CD4-positive, alpha-beta memory T cell (primary cell): ENCODE measurements at regions of chr1 and their contacts with region 1.

Region 1: GRCh38 chr1:108691942-108692723 is at the start of gene PRPF38B:
- DNase-seq: peak; percentile 92 to 96 (median 93)
- H3K4me3 ChIP-seq: peak within 1 kb of the TSS; percentile 68 to 94
- H3K4me3 Mint-ChIP-seq: peak within 1 kb of the TSS; percentile 90 to 97 (median 94)
- H3K27ac ChIP-seq: peak within 1 kb of the TSS; percentile 98
- H3K27ac Mint-ChIP-seq: peak within 1 kb of the TSS; percentile 96 to 99 (median 98)
- H3K4me1 ChIP-seq: peaks cover 50% of the 10 kb centered on the region
- H3K4me1 Mint-ChIP-seq: peaks cover 20 to 66% (median 36%) of the 10 kb centered on the region in 4 donors
- H3K27me3 ChIP-seq: no peaks in the 10 kb centered on the region
- H3K27me3 Mint-ChIP-seq: no peaks in the 10 kb centered on the region
- total RNA-seq, gene PRPF38B: 124 to 126 TPM

Region 2: GRCh38 chr1:108533351-108534083 is 158.6 kb before region 1 on chr1:
- CTCF ChIA-PET with region 1: no interaction called
- POLR2A ChIA-PET with region 1: no interaction called
- intact Hi-C with region 1: no loop called
- DNase-seq: no peak
- H3K4me3 ChIP-seq: no peak overlapping the region
- H3K4me3 Mint-ChIP-seq: no peak overlapping the region
- H3K27ac ChIP-seq: no peak overlapping the region
- H3K27ac Mint-ChIP-seq: no peak overlapping the region
- H3K4me1 ChIP-seq: no peaks in the 10 kb centered on the region
- H3K4me1 Mint-ChIP-seq: peaks cover 0 to 3% (median 0%) of the 10 kb centered on the region in 4 donors
- H3K27me3 ChIP-seq: no peaks in the 10 kb centered on the region
- H3K27me3 Mint-ChIP-seq: peaks cover 3 to 7% of the 10 kb centered on the region in 2 donors

Region 3: DNA sequence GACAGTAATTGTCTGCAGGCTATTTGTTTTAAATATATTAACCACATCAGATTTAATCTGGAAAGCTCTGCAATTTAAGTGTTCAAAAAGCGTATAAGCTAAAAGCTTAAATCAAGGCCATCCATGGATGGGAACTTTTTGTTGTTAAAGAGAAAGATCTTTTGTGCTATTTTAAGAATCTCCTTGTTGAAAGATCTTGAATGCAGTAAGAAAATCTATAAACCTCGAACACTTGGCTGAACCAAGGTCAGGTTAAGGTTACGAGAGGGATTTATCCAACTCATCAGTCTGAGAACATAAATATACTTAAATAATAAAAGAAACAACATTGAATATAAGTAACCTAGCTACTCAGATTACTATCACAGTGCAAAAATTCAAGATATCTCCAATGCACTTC is 143.7 kb before region 1 on chr1:
- CTCF ChIA-PET with region 1: no interaction called
- POLR2A ChIA-PET with region 1: no interaction called
- intact Hi-C with region 1: no loop called
- DNase-seq: no peak
- H3K4me3 ChIP-seq: no peak overlapping the region
- H3K4me3 Mint-ChIP-seq: no peak overlapping the region
- H3K27ac ChIP-seq: no peak overlapping the region
- H3K27ac Mint-ChIP-seq: no peak overlapping the region
- H3K4me1 ChIP-seq: no peaks in the 10 kb centered on the region
- H3K4me1 Mint-ChIP-seq: no peaks in the 10 kb centered on the region
- H3K27me3 ChIP-seq: no peaks in the 10 kb centered on the region
- H3K27me3 Mint-ChIP-seq: peaks cover 2 to 6% of the 10 kb centered on the region in 2 donors

Region 4: GRCh38 chr1:108559215-108560186 is 132.6 kb before region 1 on chr1 and contains the start of gene EEIG2:
- CTCF ChIA-PET with region 1: interaction called, 21 read pairs
- POLR2A ChIA-PET with region 1: interaction called, 73 read pairs
- intact Hi-C with region 1: loop called (anchors 1 kb)
- DNase-seq: peak; percentile 88 to 92 (median 90)
- H3K4me3 ChIP-seq: peak within 1 kb of the TSS; percentile 15 to 59
- H3K4me3 Mint-ChIP-seq: peak within 1 kb of the TSS; percentile 91 to 98 (median 96)
- H3K27ac ChIP-seq: peak within 1 kb of the TSS; percentile 65
- H3K27ac Mint-ChIP-seq: peak within 1 kb of the TSS; percentile 90 to 97 (median 95)
- H3K4me1 ChIP-seq: peaks cover 49% of the 10 kb centered on the region
- H3K4me1 Mint-ChIP-seq: peaks cover 25 to 45% (median 28%) of the 10 kb centered on the region in 4 donors
- H3K27me3 ChIP-seq: no peaks in the 10 kb centered on the region
- H3K27me3 Mint-ChIP-seq: no peaks in the 10 kb centered on the region
- total RNA-seq, gene EEIG2: 9.2 to 10.7 TPM

Region 5: GRCh38 chr1:108661030-108661620 is 31.0 kb before region 1 on chr1 and contains the start of gene HENMT1:
- CTCF ChIA-PET with region 1: interaction called, 45 read pairs
- POLR2A ChIA-PET with region 1: interaction called, 221 read pairs
- intact Hi-C with region 1: loop called (anchors 2 kb)
- DNase-seq: peak; percentile 88 to 90 (median 88)
- H3K4me3 ChIP-seq: peak within 1 kb of the TSS; percentile 47 to 79
- H3K4me3 Mint-ChIP-seq: peak within 1 kb of the TSS; percentile 80 to 88 (median 86)
- H3K27ac ChIP-seq: peak within 1 kb of the TSS; percentile 97
- H3K27ac Mint-ChIP-seq: peak within 1 kb of the TSS; percentile 96 to 98 (median 98)
- H3K4me1 ChIP-seq: peaks cover 25% of the 10 kb centered on the region
- H3K4me1 Mint-ChIP-seq: peaks cover 18 to 41% (median 29%) of the 10 kb centered on the region in 4 donors
- H3K27me3 ChIP-seq: no peaks in the 10 kb centered on the region
- H3K27me3 Mint-ChIP-seq: no peaks in the 10 kb centered on the region
- total RNA-seq, gene HENMT1: 19.1 to 19.3 TPM

Region 6: GRCh38 chr1:108708691-108709660 is 16.8 kb after region 1 on chr1:
- CTCF ChIA-PET with region 1: interaction called, 94 read pairs
- POLR2A ChIA-PET with region 1: interaction called, 283 read pairs
- intact Hi-C with region 1: loop called (anchors 1 kb)
- DNase-seq: peak; percentile 65 to 70 (median 67)
- H3K4me3 ChIP-seq: no peak overlapping the region
- H3K4me3 Mint-ChIP-seq: peak overlapping the region in 1 of 8 donors; percentile 7
- H3K27ac ChIP-seq: no peak overlapping the region
- H3K27ac Mint-ChIP-seq: peak overlapping the region in 6 of 7 donors; percentile 32 to 63 (median 61)
- H3K4me1 ChIP-seq: peaks cover 35% of the 10 kb centered on the region
- H3K4me1 Mint-ChIP-seq: peaks cover 19 to 45% (median 35%) of the 10 kb centered on the region in 4 donors
- H3K27me3 ChIP-seq: no peaks in the 10 kb centered on the region
- H3K27me3 Mint-ChIP-seq: no peaks in the 10 kb centered on the region

Region 7: DNA sequence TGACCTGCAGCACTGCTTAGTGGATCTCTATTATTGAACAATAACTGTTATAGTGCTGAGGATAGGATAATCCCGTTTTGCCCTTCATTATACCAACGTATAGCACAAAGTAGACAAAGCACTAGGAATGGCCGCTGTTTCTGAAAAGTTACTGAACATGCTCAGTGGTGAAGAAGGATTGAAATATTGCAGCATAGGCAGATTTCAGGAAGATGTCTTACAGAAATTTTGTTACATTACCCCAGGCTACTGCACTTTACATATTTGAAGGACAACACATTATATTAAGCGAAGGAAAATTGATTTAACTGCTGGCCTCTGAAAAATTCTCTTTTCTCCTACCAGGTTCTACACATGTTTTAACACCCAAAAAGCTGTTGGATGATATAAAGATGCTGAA is 116.3 kb after region 1 on chr1:
- CTCF ChIA-PET with region 1: no interaction called
- POLR2A ChIA-PET with region 1: no interaction called
- intact Hi-C with region 1: no loop called
- DNase-seq: no peak
- H3K4me3 ChIP-seq: no peak overlapping the region
- H3K4me3 Mint-ChIP-seq: peak overlapping the region in 1 of 8 donors; percentile 18
- H3K27ac ChIP-seq: no peak overlapping the region
- H3K27ac Mint-ChIP-seq: peak overlapping the region in 1 of 7 donors; percentile 49
- H3K4me1 ChIP-seq: no peaks in the 10 kb centered on the region
- H3K4me1 Mint-ChIP-seq: no peaks in the 10 kb centered on the region
- H3K27me3 ChIP-seq: no peaks in the 10 kb centered on the region
- H3K27me3 Mint-ChIP-seq: no peaks in the 10 kb centered on the region

Region 8: DNA sequence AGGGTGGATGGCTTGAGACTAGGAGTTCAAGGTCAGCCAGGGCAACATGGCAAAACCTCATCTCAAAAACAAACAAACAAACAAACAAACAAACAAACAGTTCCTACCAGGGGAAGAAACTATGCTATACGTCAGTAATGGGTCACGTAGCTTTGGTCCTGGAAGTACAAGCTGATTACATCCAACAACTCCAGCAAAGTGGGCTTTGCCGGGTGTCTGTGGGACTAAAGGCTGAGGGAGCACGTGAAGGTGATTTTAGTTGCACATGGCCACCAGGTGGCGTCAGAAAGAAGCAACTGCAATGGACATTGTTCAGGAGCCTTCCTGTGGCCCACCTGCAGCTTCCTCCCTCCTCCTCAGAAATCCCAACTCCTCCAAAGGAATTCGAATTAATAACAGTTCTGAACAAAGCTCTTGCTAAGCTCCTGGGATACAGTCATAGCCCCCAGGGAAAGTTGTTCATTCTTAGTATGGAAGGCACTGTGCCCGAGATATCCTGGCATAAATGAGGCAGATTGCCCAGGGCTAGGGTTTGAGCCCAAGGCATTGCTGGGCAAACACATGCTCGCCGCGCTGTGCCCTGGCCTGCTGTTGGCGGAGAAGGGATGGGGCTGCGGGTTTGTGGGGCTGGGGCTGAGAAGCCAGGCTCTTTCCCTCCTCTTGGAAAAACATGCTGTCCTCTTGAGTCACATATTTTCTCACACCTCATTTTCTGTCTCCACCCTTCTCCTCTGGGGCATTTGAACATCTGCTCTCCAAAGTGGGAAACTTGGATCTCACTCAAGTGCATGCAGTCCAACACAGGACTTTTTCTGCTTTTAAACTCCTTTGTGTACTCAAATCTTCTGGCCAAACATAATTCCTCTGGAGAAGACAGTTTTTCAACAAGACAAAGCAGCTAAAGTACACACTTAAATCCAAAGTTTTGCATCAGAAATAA is 136.2 kb after region 1 on chr1:
- CTCF ChIA-PET with region 1: interaction called, 19 read pairs
- POLR2A ChIA-PET with region 1: interaction called, 4 read pairs
- intact Hi-C with region 1: loop called (anchors 5 kb)
- DNase-seq: peak; percentile 38 to 59 (median 57)
- H3K4me3 ChIP-seq: no peak overlapping the region
- H3K4me3 Mint-ChIP-seq: no peak overlapping the region
- H3K27ac ChIP-seq: no peak overlapping the region
- H3K27ac Mint-ChIP-seq: no peak overlapping the region
- H3K4me1 ChIP-seq: peaks cover 8% of the 10 kb centered on the region
- H3K4me1 Mint-ChIP-seq: peaks cover 0 to 10% (median 7%) of the 10 kb centered on the region in 4 donors
- H3K27me3 ChIP-seq: no peaks in the 10 kb centered on the region
- H3K27me3 Mint-ChIP-seq: peaks cover 2 to 3% of the 10 kb centered on the region in 2 donors

Region 9: DNA sequence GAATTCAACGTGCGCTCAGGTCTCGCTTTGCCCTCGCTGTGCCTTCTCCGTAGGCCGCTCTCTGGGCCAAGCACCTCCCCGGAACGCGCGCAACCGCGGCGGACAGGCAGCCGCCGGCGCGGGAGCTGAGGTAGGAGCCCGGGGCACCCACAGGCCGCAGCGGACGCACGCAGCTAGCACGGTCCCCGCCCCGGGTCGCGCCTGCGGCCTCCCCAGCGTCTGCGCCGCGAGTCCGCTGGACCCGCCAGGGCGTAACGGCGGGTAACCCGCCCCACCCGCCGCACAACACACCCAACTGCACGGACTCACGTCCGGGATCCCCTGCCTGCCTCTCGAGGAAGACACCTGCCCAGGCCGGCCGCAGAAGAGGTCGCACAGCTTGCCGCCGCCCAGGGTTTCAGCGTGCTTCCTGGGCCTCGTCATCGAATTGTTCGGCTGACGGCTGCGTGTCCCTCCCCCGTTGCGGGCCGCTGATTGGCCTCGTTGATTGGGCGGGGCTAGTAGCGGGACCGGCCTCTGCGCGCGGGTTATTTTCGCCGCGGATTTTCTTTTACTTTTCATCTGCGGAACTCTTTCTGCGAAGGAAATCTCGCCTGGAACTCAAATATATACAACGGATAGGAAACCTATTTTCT is 271.0 kb after region 1 on chr1 and contains the start of gene CLCC1:
- CTCF ChIA-PET with region 1: no interaction called
- POLR2A ChIA-PET with region 1: interaction called, 9 read pairs
- intact Hi-C with region 1: loop called (anchors 2 kb)
- DNase-seq: peak; percentile 92 to 96 (median 94)
- H3K4me3 ChIP-seq: peak within 1 kb of the TSS; percentile 68 to 79
- H3K4me3 Mint-ChIP-seq: peak within 1 kb of the TSS; percentile 88 to 95 (median 90)
- H3K27ac ChIP-seq: peak within 1 kb of the TSS; percentile 81
- H3K27ac Mint-ChIP-seq: peak within 1 kb of the TSS; percentile 91 to 97 (median 96)
- H3K4me1 ChIP-seq: peaks cover 25% of the 10 kb centered on the region
- H3K4me1 Mint-ChIP-seq: peaks cover 18 to 52% (median 31%) of the 10 kb centered on the region in 4 donors
- H3K27me3 ChIP-seq: no peaks in the 10 kb centered on the region
- H3K27me3 Mint-ChIP-seq: no peaks in the 10 kb centered on the region
- total RNA-seq, gene CLCC1: 29.7 to 31.6 TPM